WTC11 (cell line): ENCODE measurements at regions of chr14 and their contacts with region 1.

Region 1: GRCh38 chr14:22002860-22003309 is 329.3 kb upstream of the OR4E1 start:
- DNase-seq: peak; percentile 76
- ATAC-seq: peak; percentile 85
- H3K4me3 Mint-ChIP-seq: no peak overlapping the region
- H3K27ac Mint-ChIP-seq: no peak overlapping the region
- H3K4me1 Mint-ChIP-seq: no peaks in the 10 kb centered on the region; the same call in 1 of the 2 replicates
- H3K27me3 Mint-ChIP-seq: peaks cover 14% of the 10 kb centered on the region
- CTCF ChIP-seq: peak; percentile 58

Region 2: GRCh38 chr14:21987937-21988336 is 14.9 kb before region 1 on chr14:
- CTCF ChIA-PET with region 1: interaction called, 100 read pairs
- POLR2A ChIA-PET with region 1: interaction called, 3 read pairs
- DNase-seq: peak; percentile 27
- ATAC-seq: peak; percentile 77
- H3K4me3 Mint-ChIP-seq: no peak overlapping the region
- H3K27ac Mint-ChIP-seq: no peak overlapping the region
- H3K4me1 Mint-ChIP-seq: no peaks in the 10 kb centered on the region
- H3K27me3 Mint-ChIP-seq: peaks cover 4% of the 10 kb centered on the region; the same call in 1 of the 2 replicates
- CTCF ChIP-seq: peak; percentile 35; the same call in 1 of the 2 replicates